Posterior cingulate gyrus (tissue), 11 donors: ENCODE measurements at regions of chr7 and their contacts with region 1.

Region 1: DNA sequence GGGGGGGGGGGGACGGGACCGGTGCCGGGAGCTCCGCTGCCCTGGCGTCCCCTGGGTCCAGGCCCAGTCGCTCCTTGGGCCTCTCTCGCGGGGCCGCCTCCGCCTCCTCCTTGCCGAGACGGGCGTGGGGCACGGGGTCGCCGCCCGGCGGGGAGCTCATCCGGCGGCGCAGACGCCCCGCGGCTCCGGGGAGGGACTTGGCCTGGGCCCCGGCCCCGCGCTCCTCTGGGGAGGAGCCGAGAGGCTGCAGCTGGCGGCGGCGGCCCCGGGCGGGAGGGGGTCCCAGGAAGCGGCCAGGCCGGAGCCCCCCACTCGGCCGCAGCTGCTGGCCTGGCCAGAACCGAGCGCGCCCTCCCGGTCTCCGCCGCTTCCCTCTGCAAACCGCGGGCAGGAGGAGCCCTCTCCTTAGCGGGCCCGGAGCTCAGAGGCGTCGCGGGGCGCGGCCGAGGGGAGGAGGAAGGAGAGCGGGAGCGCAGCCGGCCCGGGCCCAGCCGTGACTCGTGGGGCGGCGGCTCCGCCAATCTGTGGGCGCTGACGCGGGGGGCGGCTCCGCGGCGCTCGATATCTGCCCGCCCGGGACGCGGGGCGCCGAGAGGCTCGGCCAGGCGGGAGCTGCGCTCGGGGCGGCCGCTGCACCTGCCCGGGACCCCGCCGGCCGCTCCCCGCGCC is at the start of gene FAM20C:
- DNase-seq: peak; percentile 73 to 98 (median 86)

Region 2: GRCh38 chr7:234655-235578 is 42.8 kb after region 1 on chr7:
- intact Hi-C with region 1: loop called (anchors 5 kb)
- DNase-seq: no peak